PC-9 (cell line): ENCODE measurements at regions of chr5 and their contacts with region 1.

Region 1: DNA sequence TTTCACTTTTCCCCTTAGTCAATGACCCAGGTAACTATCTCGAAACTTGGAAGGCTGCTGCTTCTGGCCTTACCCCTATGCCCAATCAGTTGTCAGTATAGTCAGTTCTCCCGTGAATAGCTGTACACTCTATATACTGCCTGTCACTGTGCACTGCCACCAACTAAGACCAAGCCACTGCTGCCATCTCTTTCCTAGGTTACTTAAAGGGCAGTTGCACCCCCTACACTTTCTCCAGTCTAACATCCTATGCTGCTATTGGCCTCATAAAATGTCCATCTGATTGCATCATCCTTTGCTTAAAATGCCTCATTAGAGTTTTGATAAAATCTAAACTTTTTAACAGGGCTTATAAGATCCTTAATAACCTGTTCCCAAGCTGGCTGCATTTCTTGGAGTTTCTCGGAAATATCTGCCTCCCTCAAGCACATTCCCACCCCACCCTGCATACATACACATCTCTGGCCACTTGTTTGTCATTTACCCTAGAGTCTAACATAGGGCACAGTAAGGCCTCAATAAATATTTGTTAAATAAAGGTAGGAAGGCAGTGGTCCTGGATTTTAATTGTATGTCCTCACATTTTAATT is 32.8 kb upstream of the TNFAIP8 start:
- DNase-seq: no peak
- H3K4me3 ChIP-seq: no peak overlapping the region
- H3K27ac ChIP-seq: peak overlapping the region; percentile 89
- H3K4me1 ChIP-seq: peaks cover 52% of the 10 kb centered on the region
- H3K27me3 ChIP-seq: no peaks in the 10 kb centered on the region
- CTCF ChIP-seq: no peak

Region 2: GRCh38 chr5:119274767-119275130 is 48.3 kb before region 1 on chr5:
- CTCF ChIA-PET with region 1: no interaction called
- POLR2A ChIA-PET with region 1: interaction called, 5 read pairs
- intact Hi-C with region 1: loop called (anchors 1 kb)
- DNase-seq: no peak
- H3K4me3 ChIP-seq: no peak overlapping the region
- H3K27ac ChIP-seq: peak overlapping the region; percentile 92
- H3K4me1 ChIP-seq: peaks cover 49% of the 10 kb centered on the region
- H3K27me3 ChIP-seq: no peaks in the 10 kb centered on the region
- CTCF ChIP-seq: no peak

Region 3: DNA sequence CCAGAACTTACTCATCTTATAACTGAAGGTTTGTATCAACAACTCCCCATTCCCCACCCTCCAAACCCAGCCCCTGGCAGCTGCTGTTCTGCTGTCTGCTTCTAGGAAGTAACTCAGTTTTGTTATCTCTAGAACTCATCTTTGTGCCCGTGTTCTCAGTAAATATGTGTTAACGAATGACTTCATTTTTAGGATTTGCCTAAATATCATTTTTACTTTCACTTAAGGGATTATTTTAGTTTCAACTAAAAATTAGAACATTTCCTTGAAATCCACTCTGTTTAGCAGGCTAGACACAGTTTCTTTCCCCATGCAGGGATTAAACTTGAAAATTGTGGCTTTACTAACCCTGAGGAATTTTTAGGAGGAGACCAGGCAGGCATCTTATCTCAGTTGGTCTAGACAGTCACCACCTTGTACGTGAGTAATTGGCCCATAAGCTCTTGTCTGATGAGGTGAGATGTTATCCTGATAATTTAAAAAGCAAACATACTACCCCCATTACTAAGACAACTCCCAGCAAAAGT is 35.4 kb before region 1 on chr5:
- CTCF ChIA-PET with region 1: no interaction called
- POLR2A ChIA-PET with region 1: no interaction called
- intact Hi-C with region 1: loop called (anchors 5 kb)
- DNase-seq: peak; percentile 32 to 91
- H3K4me3 ChIP-seq: peak overlapping the region; percentile 43; the same call in 1 of the 2 replicates
- H3K27ac ChIP-seq: peak overlapping the region; percentile 75
- H3K4me1 ChIP-seq: peaks cover 50% of the 10 kb centered on the region
- H3K27me3 ChIP-seq: no peaks in the 10 kb centered on the region
- CTCF ChIP-seq: no peak

Region 4: DNA sequence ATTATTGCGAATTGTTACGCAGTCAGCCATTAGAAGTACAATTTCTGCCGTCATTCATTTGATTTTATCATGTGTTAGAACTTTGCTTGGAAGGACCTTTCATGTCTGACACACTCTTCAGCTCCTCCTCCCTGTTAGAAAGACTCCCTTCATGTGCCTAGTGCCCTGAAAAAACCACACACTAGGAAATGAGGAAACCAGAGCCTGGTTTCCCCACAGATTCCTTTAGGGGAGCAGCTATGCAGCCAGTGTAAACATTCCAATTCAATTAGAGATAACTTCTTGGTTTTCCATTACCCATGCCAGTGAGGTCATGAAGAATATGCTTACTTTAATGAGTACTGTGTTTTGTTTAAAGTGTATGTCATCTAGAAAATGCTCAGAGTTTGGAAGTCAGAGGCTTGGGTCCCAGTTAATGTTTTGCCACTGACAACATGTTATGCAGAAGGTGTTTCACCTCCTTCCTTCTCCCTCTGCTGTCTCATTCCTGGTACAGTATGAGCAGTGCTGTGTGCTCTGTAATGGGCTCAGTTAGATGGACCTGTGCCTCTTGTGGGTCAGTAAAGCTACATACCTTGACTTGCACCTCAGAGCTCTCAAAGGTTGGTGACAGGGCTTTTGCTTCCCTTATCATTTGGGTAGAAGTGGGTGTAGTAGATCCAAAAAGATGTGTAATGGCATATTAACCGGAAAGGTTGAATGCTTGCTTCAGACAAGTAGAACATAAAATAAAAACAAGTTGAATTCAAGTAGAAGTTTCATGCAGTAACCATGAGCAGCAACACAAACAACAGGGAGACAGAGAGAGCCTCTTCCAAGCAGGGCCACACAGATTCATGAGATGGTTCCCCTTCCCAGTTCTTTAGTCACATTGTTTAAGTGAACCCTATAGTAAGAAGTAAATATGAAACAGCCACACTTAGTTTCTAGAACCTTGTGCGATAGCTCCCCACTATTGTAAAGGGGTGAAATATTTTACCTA is 19.8 kb before region 1 on chr5:
- CTCF ChIA-PET with region 1: interaction called, 5 read pairs
- POLR2A ChIA-PET with region 1: interaction called, 3 read pairs
- intact Hi-C with region 1: loop called (anchors 2 kb)
- DNase-seq: peak; percentile 60 to 96
- H3K4me3 ChIP-seq: peak overlapping the region; percentile 7; the same call in 1 of the 2 replicates
- H3K27ac ChIP-seq: peak overlapping the region; percentile 65
- H3K4me1 ChIP-seq: peaks cover 40% of the 10 kb centered on the region
- H3K27me3 ChIP-seq: no peaks in the 10 kb centered on the region
- CTCF ChIP-seq: no peak

Region 5: GRCh38 chr5:119355685-119356611 is 32.9 kb after region 1 on chr5 and contains the start of gene TNFAIP8:
- CTCF ChIA-PET with region 1: no interaction called
- POLR2A ChIA-PET with region 1: no interaction called
- intact Hi-C with region 1: loop called (anchors 2 kb)
- DNase-seq: peak; percentile 56 to 58
- H3K4me3 ChIP-seq: peak within 1 kb of the TSS; percentile 96
- H3K27ac ChIP-seq: peak within 1 kb of the TSS; percentile 78
- H3K4me1 ChIP-seq: peaks cover 67% of the 10 kb centered on the region
- H3K27me3 ChIP-seq: no peaks in the 10 kb centered on the region
- CTCF ChIP-seq: no peak
- total RNA-seq, gene TNFAIP8: 15.0 and 16.4 TPM in 2 replicates